Uterus (tissue), 4 donors: ENCODE measurements at regions of chr5 and their contacts with region 1.

Region 1: GRCh38 chr5:154811653-154812365 is 38.6 kb downstream of the FAXDC2 start:
- DNase-seq: peak; percentile 50 to 54
- H3K4me3 ChIP-seq: no peak overlapping the region
- H3K27ac ChIP-seq: no peak overlapping the region
- H3K4me1 ChIP-seq: no peaks in the 10 kb centered on the region
- H3K27me3 ChIP-seq: no peaks in the 10 kb centered on the region
- CTCF ChIP-seq: peak; percentile 70 to 84 (median 73)
- POLR2A ChIP-seq: no peak

Region 2: GRCh38 chr5:154647114-154647760 is 164.6 kb before region 1 on chr5:
- intact Hi-C with region 1: loop called (anchors 5 kb)
- DNase-seq: peak in 1 of 2 donors; percentile 17
- H3K4me3 ChIP-seq: peak overlapping the region in 1 of 2 donors; percentile 19
- H3K27ac ChIP-seq: no peak overlapping the region
- H3K4me1 ChIP-seq: no peaks in the 10 kb centered on the region
- H3K27me3 ChIP-seq: no peaks in the 10 kb centered on the region
- CTCF ChIP-seq: no peak
- POLR2A ChIP-seq: no peak